Dendritic cell treated with granulocyte-macrophage colony-stimulating factor and Interleukin-4, amounts not matched to agents 40 ng/mL and 50 ng/mL, for 4 days (primary cell): ENCODE measurements at regions of chr5 and their contacts with region 1.

Region 1: GRCh38 chr5:39283231-39283818 is 64.0 kb upstream of the FYB1 start:
- H3K4me3 Mint-ChIP-seq: no peak overlapping the region
- H3K27ac Mint-ChIP-seq: peak overlapping the region; percentile 41
- H3K4me1 Mint-ChIP-seq: peaks cover 30% of the 10 kb centered on the region
- H3K27me3 Mint-ChIP-seq: no peaks in the 10 kb centered on the region

Region 2: DNA sequence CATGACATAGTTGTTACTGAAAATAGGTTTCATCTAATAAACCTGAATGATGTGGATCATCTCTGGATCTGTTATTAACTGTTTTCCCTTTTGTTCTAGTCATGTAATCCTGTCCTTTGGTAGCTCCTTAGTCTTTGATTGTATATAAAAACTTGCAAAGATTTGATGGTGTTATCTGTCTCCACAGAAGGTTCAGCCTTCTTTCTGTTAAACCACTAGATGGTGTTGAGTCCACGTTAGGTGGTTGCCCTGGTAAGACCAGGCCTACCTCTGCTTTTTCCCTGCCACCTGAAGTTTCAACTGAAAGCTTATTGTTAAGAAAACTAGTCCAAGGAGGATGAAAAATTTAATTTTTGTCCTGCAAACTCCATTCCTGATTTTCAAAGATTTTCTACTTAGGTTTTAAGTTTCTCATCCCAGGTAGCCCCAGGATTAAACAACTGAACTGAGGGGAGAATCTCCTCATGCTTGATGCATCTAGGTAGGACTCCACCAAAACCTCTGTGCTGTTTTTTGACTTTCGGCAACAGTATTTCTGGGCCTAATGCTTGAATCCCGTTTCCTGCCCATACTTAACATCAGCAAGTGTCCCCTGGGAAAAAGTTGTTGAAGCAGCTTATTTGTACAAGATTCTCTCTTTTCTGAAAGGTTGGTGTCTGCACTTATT is 277.6 kb before region 1 on chr5:
- intact Hi-C with region 1: loop called (anchors 10 kb)
- H3K4me3 Mint-ChIP-seq: no peak overlapping the region
- H3K27ac Mint-ChIP-seq: no peak overlapping the region
- H3K4me1 Mint-ChIP-seq: no peaks in the 10 kb centered on the region
- H3K27me3 Mint-ChIP-seq: no peaks in the 10 kb centered on the region

Region 3: DNA sequence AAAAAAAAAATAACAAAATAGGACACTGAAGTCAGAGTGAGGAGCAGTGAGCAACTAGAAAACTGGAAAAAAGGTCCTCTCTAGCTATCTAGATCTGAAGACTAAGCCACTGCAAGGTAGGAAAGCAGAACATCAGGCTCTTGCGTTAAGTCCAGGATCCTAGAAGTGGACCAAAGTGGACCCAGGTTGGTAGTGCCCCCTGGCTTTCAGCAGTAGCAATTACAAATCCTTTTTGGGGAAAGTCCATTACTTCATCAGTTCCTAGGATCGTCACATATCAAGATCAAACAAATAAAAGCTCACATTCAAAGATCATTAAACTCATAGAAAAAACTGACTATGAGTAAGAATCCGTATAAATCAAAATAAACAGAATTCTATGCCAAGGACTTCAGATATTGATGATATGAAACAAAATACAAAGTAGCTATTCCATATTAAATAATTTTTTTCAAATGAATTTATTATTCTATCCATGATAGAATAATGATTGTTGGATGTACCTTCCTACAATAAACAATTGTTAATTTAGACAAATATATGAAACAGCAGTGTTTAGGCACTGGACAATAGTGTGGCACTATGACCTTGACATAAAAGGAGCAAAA is 202.6 kb before region 1 on chr5:
- intact Hi-C with region 1: loop called (anchors 10 kb)
- H3K4me3 Mint-ChIP-seq: no peak overlapping the region
- H3K27ac Mint-ChIP-seq: no peak overlapping the region
- H3K4me1 Mint-ChIP-seq: peaks cover 9% of the 10 kb centered on the region
- H3K27me3 Mint-ChIP-seq: peaks cover 2% of the 10 kb centered on the region

Region 4: DNA sequence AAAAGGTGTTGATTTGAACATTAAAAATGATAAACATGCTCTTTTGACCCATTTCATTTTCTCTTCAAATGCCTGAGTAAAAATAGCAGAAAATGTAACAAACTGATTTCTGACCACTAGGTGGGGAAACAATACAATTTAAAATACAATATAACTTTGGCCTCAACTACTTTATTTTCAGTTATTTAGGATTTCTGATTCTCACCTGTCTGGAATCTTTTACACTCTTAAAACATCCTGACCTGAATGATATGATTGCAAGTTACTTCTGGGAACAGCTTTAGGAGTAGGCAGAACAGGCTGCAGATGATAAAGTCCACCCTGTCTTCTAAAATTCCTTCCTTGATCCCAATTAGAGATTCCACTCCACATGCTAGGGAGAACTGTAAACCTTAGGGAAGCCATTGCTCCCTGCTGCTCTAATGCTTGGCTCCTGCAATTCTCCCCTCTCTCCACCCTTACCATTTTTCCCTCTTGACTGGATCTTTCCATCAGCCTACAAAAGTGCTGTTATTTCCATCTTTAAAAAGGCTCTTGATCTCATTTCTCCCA is 134.3 kb before region 1 on chr5:
- intact Hi-C with region 1: loop called (anchors 5 kb)
- H3K4me3 Mint-ChIP-seq: no peak overlapping the region
- H3K27ac Mint-ChIP-seq: peak overlapping the region; percentile 7
- H3K4me1 Mint-ChIP-seq: peaks cover 60% of the 10 kb centered on the region
- H3K27me3 Mint-ChIP-seq: no peaks in the 10 kb centered on the region

Region 5: GRCh38 chr5:39217365-39218281 is 65.7 kb before region 1 on chr5:
- intact Hi-C with region 1: loop called (anchors 1 kb)
- H3K4me3 Mint-ChIP-seq: peak overlapping the region; percentile 50
- H3K27ac Mint-ChIP-seq: peak overlapping the region; percentile 91
- H3K4me1 Mint-ChIP-seq: peaks cover 79% of the 10 kb centered on the region
- H3K27me3 Mint-ChIP-seq: no peaks in the 10 kb centered on the region